ENCODE measurements at regions of chr6 and their contacts with region 1.

Region 1: GRCh38 chr6:28355743-28356665 is 6.3 kb downstream of the ZKSCAN3 start:
- DNase-seq: peak; percentile 95
- ATAC-seq: peak; percentile 46
- H3K4me3 ChIP-seq: peak overlapping the region; percentile 84
- H3K27ac ChIP-seq: peak overlapping the region; percentile 87
- H3K4me1 ChIP-seq: peaks cover 49% of the 10 kb centered on the region
- H3K27me3 ChIP-seq: no peaks in the 10 kb centered on the region
- CTCF ChIP-seq: peak; percentile 77

Region 2: DNA sequence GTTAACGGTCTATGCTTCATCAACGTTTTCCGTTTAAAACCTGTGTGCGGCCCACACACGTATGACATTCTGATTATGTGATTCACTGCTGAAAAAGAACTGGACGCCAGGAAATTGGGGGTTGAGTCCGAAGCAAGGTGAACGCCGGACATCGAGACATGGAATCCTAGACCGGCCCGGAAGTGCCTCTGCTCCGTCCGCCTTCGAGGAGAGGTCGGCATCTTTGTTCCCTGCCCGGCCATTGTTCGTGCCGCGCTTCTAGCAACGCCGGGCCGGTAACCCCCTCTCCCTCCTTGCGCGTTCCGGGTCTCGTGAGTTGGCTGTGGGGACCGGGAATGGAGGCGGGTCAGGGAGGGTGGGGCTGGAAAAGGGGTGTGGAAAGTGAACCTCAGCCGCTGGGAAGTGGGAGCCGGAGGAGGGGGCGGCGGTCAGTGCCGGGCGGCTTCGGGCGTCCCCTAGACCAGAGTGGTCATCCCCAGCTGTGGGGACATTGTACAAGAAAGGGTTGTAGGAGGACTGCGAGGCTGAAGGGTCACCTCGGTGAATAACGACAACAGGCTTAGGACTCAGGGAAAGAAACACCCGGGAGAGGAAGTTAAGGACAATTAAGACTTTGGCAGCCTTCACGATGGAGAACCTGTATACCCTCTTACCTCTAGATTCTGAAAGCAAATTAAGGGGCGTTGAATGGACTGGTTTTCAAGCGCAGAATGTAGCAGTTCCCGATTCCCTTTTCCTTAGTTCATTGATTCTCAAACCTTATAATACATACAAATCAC is 130.8 kb before region 1 on chr6 and contains the start of gene ZSCAN9:
- CTCF ChIA-PET with region 1: no interaction called
- POLR2A ChIA-PET with region 1: no interaction called
- intact Hi-C with region 1: loop called (anchors 1 kb)
- DNase-seq: peak; percentile 93
- ATAC-seq: peak; percentile 93
- H3K4me3 ChIP-seq: peak within 1 kb of the TSS; percentile 92
- H3K27ac ChIP-seq: peak within 1 kb of the TSS; percentile 42
- H3K4me1 ChIP-seq: peaks cover 20% of the 10 kb centered on the region
- H3K27me3 ChIP-seq: no peaks in the 10 kb centered on the region
- CTCF ChIP-seq: no peak
- total RNA-seq, gene ZSCAN9: 10.8 and 11.7 TPM in 2 replicates

Region 3: DNA sequence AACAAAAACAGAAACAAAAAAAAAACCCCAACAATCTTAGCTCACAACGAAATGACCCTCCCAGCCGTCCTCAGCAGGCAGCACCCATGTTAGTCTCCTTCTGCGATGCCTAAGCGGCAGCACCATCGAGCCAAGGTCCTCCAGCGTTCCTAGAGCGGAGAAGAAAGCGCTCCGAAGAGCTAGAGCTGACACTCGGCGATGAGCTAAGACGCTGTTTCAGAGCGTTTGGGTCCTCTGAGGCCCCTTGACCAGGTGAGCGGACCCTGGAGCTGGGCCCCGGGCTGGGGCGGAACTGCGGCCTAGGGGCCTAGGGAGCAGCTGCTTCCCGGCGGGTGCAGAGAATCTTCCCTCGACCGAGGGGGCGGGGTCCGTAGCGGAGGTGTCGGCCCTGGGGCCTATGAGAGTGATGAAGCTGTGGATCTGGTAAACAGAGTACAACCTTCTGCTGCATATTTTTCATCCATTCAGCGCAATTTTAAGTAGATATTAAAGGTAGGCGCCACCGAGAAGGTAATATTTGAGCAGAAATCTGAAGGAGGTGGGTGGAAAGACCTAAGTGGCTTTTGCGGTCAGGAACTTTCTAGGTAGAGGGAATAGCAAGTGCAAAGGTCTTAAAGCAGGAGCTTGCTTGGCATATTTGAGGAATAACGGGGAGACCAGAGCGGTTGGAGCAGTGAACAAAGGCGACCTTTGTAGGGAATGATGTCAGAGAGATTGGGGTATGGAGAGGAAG is 88.9 kb before region 1 on chr6 and contains the start of gene ZSCAN26:
- CTCF ChIA-PET with region 1: interaction called, 6 read pairs
- POLR2A ChIA-PET with region 1: interaction called, 4 read pairs
- intact Hi-C with region 1: loop called (anchors 1 kb)
- DNase-seq: peak; percentile 93
- ATAC-seq: peak; percentile 91
- H3K4me3 ChIP-seq: peak within 1 kb of the TSS; percentile 86
- H3K27ac ChIP-seq: peak within 1 kb of the TSS; percentile 48
- H3K4me1 ChIP-seq: peaks cover 28% of the 10 kb centered on the region
- H3K27me3 ChIP-seq: no peaks in the 10 kb centered on the region
- CTCF ChIP-seq: no peak
- total RNA-seq, gene ZSCAN26: 10.8 and 12.3 TPM in 2 replicates

Region 4: GRCh38 chr6:28330041-28330440 is 26.0 kb before region 1 on chr6:
- CTCF ChIA-PET with region 1: interaction called, 5 read pairs
- POLR2A ChIA-PET with region 1: interaction called, 3 read pairs
- intact Hi-C with region 1: loop called (anchors 2 kb)
- DNase-seq: no peak
- ATAC-seq: no peak
- H3K4me3 ChIP-seq: no peak overlapping the region
- H3K27ac ChIP-seq: no peak overlapping the region
- H3K4me1 ChIP-seq: 0 out of 2 replicates have a peak, but pooled peaks cover 2% of the 10 kb centered on the region
- H3K27me3 ChIP-seq: no peaks in the 10 kb centered on the region
- CTCF ChIP-seq: no peak